ENCODE measurements at regions of chr16 and their contacts with region 1.

Region 1: GRCh38 chr16:27179500-27180072 is 23.7 kb upstream of the KDM8 start:
- DNase-seq: peak; percentile 95
- ATAC-seq: peak; percentile 91
- H3K4me3 Mint-ChIP-seq: no peak overlapping the region
- H3K27ac Mint-ChIP-seq: peak overlapping the region; percentile 80
- H3K4me1 Mint-ChIP-seq: peaks cover 48% of the 10 kb centered on the region
- H3K27me3 Mint-ChIP-seq: no peaks in the 10 kb centered on the region

Region 2: GRCh38 chr16:26598061-26598460 is 581.5 kb before region 1 on chr16:
- CTCF ChIA-PET with region 1: no interaction called
- POLR2A ChIA-PET with region 1: no interaction called
- intact Hi-C with region 1: loop called in 1 of 2 experiments (anchors 5 kb)
- DNase-seq: peak; percentile 83
- ATAC-seq: peak; percentile 91
- H3K4me3 Mint-ChIP-seq: peak overlapping the region; percentile 20
- H3K27ac Mint-ChIP-seq: peak overlapping the region; percentile 82
- H3K4me1 Mint-ChIP-seq: peaks cover 54% of the 10 kb centered on the region
- H3K27me3 Mint-ChIP-seq: peaks cover 19% of the 10 kb centered on the region

Region 3: GRCh38 chr16:27164352-27164751 is 15.2 kb before region 1 on chr16:
- CTCF ChIA-PET with region 1: interaction called, 14 read pairs
- POLR2A ChIA-PET with region 1: no interaction called
- intact Hi-C with region 1: no loop called
- DNase-seq: no peak
- ATAC-seq: no peak
- H3K4me3 Mint-ChIP-seq: no peak overlapping the region
- H3K27ac Mint-ChIP-seq: no peak overlapping the region
- H3K4me1 Mint-ChIP-seq: peaks cover 20% of the 10 kb centered on the region
- H3K27me3 Mint-ChIP-seq: no peaks in the 10 kb centered on the region

Region 4: DNA sequence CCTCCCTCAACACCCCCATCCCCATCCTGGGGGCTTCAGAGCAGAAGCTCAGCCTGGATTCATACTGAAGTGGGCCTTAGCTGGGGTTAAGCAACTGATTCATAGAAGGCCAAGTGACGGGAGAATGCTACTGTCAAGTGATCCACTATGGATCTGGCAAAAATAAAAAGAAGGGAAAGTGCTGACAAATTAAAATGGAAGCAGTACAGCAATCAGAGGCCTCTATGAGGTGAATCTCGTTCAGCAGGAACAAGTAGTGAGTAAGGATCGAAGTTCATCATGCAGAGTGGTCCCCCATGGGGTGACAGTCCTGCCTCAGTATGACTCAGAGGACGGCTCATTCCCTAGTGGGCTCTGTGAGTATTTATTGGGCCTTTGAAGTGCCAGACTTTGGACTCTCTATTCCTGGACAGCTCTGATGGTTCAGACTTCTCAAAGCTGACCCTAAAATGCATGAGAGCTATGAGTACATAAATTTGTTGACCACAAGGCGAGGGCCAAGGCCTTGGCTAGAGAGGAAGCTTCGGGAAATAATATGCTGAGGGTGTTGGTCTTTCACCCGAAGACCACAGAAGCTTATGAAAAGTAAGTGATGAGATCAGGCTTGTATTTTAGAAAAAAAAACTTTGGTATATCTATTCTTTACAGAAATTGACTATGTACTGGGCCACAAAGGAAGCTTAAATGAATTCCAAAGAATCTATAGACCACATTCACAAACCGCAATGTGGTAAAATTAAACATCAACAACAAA is 94.3 kb after region 1 on chr16:
- CTCF ChIA-PET with region 1: interaction called, 7 read pairs
- POLR2A ChIA-PET with region 1: interaction called, 4 read pairs
- intact Hi-C with region 1: loop called in 1 of 2 experiments (anchors 5 kb)
- DNase-seq: peak; percentile 69
- ATAC-seq: peak; percentile 89
- H3K4me3 Mint-ChIP-seq: peak overlapping the region; percentile 35
- H3K27ac Mint-ChIP-seq: peak overlapping the region; percentile 87
- H3K4me1 Mint-ChIP-seq: peaks cover 70% of the 10 kb centered on the region
- H3K27me3 Mint-ChIP-seq: no peaks in the 10 kb centered on the region

Region 5: DNA sequence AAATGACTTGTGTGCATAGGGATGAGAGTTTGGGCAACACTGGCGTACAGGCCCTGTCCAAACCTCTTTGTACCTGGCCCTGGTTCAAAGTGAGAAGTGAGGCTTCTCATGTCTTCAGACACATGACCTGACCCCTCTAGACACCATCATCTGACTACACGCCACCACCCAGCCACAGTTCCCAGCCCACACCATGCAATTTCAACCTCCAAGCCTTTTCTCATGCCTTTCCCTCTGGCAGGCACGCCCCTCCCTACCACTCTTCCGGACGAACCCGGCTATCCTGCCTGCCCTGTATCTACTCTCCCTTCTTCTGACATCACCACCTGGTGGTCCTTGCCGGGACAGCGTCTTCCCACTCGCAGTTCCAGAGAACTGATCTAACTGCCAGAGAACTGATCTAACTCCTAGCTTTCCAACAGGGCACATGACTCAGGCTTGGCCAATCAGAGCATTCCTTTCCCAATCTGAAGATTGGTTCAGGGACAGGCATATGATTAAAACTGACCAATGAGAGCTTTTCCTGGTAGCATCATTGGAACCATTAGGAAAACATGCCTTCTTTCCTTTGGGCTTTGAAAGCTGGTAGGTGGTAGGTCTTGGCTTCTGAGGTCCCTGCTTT is 195.3 kb after region 1 on chr16:
- CTCF ChIA-PET with region 1: interaction called, 23 read pairs
- POLR2A ChIA-PET with region 1: interaction called, 3 read pairs
- intact Hi-C with region 1: no loop called
- DNase-seq: peak; percentile 81
- ATAC-seq: peak; percentile 48
- H3K4me3 Mint-ChIP-seq: no peak overlapping the region
- H3K27ac Mint-ChIP-seq: no peak overlapping the region
- H3K4me1 Mint-ChIP-seq: peaks cover 50% of the 10 kb centered on the region
- H3K27me3 Mint-ChIP-seq: no peaks in the 10 kb centered on the region

Measured in activated CD4-positive, alpha-beta T cell treated with anti-CD3 and anti-CD28 coated beads for 36 hours (primary cell).